ENCODE measurements at regions of chr4 and their contacts with region 1.

Region 1: DNA sequence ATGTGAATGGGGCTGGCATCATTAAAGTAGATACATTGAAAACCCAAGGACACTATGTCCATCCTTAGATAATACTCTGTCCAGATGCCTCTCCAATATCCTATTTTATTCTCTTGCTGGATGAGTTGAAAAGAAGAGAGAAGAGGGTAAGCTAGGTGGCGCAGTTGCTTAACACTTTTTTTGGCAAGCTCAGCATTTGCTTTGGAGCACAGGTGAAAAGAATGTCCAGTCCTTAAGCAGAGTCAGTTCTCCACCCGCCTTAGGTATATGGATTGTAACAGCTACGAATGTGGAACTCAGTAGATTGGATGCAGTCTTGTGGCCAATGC is 208.4 kb downstream of the NWD2 start:
- DNase-seq: peak; percentile 80 to 83
- H3K4me3 ChIP-seq: peak overlapping the region; percentile 61
- H3K4me3 Mint-ChIP-seq: peak overlapping the region; percentile 89
- H3K27ac Mint-ChIP-seq: peak overlapping the region; percentile 24
- H3K4me1 ChIP-seq: peaks cover 19% of the 10 kb centered on the region
- H3K4me1 Mint-ChIP-seq: peaks cover 21% of the 10 kb centered on the region
- H3K27me3 ChIP-seq: no peaks in the 10 kb centered on the region
- H3K27me3 Mint-ChIP-seq: no peaks in the 10 kb centered on the region
- CTCF ChIP-seq: peak; percentile 46 to 71

Region 2: GRCh38 chr4:36502350-36502749 is 950.6 kb before region 1 on chr4:
- CTCF ChIA-PET with region 1: no interaction called
- POLR2A ChIA-PET with region 1: no interaction called
- intact Hi-C with region 1: no loop called
- DNase-seq: no peak
- H3K4me3 ChIP-seq: no peak overlapping the region
- H3K4me3 Mint-ChIP-seq: no peak overlapping the region
- H3K27ac Mint-ChIP-seq: no peak overlapping the region
- H3K4me1 ChIP-seq: no peaks in the 10 kb centered on the region
- H3K4me1 Mint-ChIP-seq: no peaks in the 10 kb centered on the region
- H3K27me3 ChIP-seq: no peaks in the 10 kb centered on the region
- H3K27me3 Mint-ChIP-seq: peaks cover 3% of the 10 kb centered on the region
- CTCF ChIP-seq: no peak

Region 3: DNA sequence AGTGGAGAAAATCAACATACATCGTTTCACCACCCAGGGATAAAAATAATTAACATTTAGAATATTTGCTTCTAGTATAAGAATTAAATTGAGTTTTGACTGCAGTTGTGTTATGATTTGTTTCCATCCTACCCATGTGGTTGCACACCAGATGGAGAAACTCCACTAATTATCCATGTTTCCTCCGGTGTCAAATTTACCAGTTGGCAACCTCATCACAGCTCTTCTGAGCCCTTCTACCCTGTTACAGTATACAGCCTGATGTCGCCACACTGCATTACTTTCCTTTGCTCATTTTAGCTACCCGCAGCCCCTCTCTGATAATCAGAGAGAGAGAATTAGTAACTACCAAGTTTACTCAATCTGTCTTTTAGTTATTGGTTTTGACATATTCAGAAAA is 760.3 kb before region 1 on chr4:
- CTCF ChIA-PET with region 1: no interaction called
- POLR2A ChIA-PET with region 1: no interaction called
- intact Hi-C with region 1: no loop called
- DNase-seq: no peak
- H3K4me3 ChIP-seq: no peak overlapping the region
- H3K4me3 Mint-ChIP-seq: no peak overlapping the region
- H3K27ac Mint-ChIP-seq: no peak overlapping the region
- H3K4me1 ChIP-seq: no peaks in the 10 kb centered on the region
- H3K4me1 Mint-ChIP-seq: no peaks in the 10 kb centered on the region
- H3K27me3 ChIP-seq: no peaks in the 10 kb centered on the region
- H3K27me3 Mint-ChIP-seq: peaks cover 3% of the 10 kb centered on the region
- CTCF ChIP-seq: no peak

Region 4: DNA sequence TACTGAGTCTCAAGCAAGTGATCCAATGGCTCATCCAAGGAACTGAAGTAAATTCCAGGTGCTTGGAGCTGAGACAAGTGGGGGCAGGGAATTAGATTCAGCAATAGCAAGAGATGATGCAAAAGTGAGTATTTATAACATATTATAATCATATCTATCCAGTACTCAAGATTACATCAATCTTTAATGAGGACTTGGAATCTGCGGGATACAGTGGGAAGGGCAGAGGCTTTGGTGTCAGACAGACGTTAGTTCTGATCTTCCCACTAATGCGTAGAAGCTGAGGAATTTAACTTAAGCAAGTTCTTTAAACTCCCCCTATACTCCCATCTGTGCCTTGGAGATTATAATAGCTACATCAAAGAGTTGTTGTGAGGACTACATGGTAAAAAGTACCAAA is 351.7 kb before region 1 on chr4:
- CTCF ChIA-PET with region 1: no interaction called
- POLR2A ChIA-PET with region 1: no interaction called
- intact Hi-C with region 1: no loop called
- DNase-seq: no peak
- H3K4me3 ChIP-seq: no peak overlapping the region
- H3K4me3 Mint-ChIP-seq: no peak overlapping the region
- H3K27ac Mint-ChIP-seq: no peak overlapping the region
- H3K4me1 ChIP-seq: no peaks in the 10 kb centered on the region
- H3K4me1 Mint-ChIP-seq: no peaks in the 10 kb centered on the region
- H3K27me3 ChIP-seq: no peaks in the 10 kb centered on the region; the same call in 1 of the 2 replicates
- H3K27me3 Mint-ChIP-seq: peaks cover 3% of the 10 kb centered on the region
- CTCF ChIP-seq: no peak

Region 5: DNA sequence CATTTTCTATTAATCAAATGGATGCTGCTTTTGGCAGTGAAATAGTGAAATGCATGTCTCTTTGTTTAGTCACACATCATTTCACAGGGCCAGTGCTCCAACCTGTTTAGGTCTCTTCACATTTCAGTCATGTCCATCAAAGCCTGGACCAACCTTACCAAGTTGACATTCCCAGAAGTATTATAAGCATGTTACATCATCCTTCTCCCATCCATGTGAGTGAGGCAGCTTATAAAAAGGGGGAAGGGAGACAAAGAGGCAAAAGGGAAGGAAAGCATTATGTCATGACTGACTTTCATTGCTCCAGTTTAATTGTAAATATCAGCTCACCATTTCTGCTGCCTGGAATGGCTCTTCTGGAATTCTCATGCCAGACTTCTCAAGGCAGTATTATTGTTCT is 113.9 kb before region 1 on chr4:
- CTCF ChIA-PET with region 1: no interaction called
- POLR2A ChIA-PET with region 1: no interaction called
- intact Hi-C with region 1: no loop called
- DNase-seq: no peak
- H3K4me3 ChIP-seq: no peak overlapping the region
- H3K4me3 Mint-ChIP-seq: no peak overlapping the region
- H3K27ac Mint-ChIP-seq: peak overlapping the region; percentile 9
- H3K4me1 ChIP-seq: no peaks in the 10 kb centered on the region
- H3K4me1 Mint-ChIP-seq: no peaks in the 10 kb centered on the region
- H3K27me3 ChIP-seq: no peaks in the 10 kb centered on the region
- H3K27me3 Mint-ChIP-seq: peaks cover 4% of the 10 kb centered on the region
- CTCF ChIP-seq: no peak

Region 6: GRCh38 chr4:37434469-37434868 is 18.4 kb before region 1 on chr4:
- CTCF ChIA-PET with region 1: interaction called, 33 read pairs
- POLR2A ChIA-PET with region 1: no interaction called
- intact Hi-C with region 1: loop called (anchors 1 kb)
- DNase-seq: peak in 1 of 2 experiments; percentile 33
- H3K4me3 ChIP-seq: no peak overlapping the region
- H3K4me3 Mint-ChIP-seq: no peak overlapping the region
- H3K27ac Mint-ChIP-seq: no peak overlapping the region
- H3K4me1 ChIP-seq: peaks cover 58% of the 10 kb centered on the region
- H3K4me1 Mint-ChIP-seq: peaks cover 37% of the 10 kb centered on the region
- H3K27me3 ChIP-seq: no peaks in the 10 kb centered on the region
- H3K27me3 Mint-ChIP-seq: no peaks in the 10 kb centered on the region
- CTCF ChIP-seq: peak in 1 of 2 experiments; percentile 31

Region 7: GRCh38 chr4:37471971-37472370 is 19.1 kb after region 1 on chr4:
- CTCF ChIA-PET with region 1: interaction called, 3 read pairs
- POLR2A ChIA-PET with region 1: interaction called, 5 read pairs
- intact Hi-C with region 1: loop called (anchors 2 kb)
- DNase-seq: peak; percentile 68 to 83
- H3K4me3 ChIP-seq: no peak overlapping the region
- H3K4me3 Mint-ChIP-seq: peak overlapping the region; percentile 39
- H3K27ac Mint-ChIP-seq: peak overlapping the region; percentile 75
- H3K4me1 ChIP-seq: peaks cover 70% of the 10 kb centered on the region
- H3K4me1 Mint-ChIP-seq: peaks cover 38% of the 10 kb centered on the region
- H3K27me3 ChIP-seq: no peaks in the 10 kb centered on the region
- H3K27me3 Mint-ChIP-seq: no peaks in the 10 kb centered on the region
- CTCF ChIP-seq: no peak

Region 8: GRCh38 chr4:37528166-37528885 is 75.4 kb after region 1 on chr4:
- CTCF ChIA-PET with region 1: interaction called, 33 read pairs
- POLR2A ChIA-PET with region 1: interaction called, 4 read pairs
- intact Hi-C with region 1: loop called (anchors 1 kb)
- DNase-seq: peak; percentile 41 to 51
- H3K4me3 ChIP-seq: no peak overlapping the region
- H3K4me3 Mint-ChIP-seq: no peak overlapping the region
- H3K27ac Mint-ChIP-seq: no peak overlapping the region
- H3K4me1 ChIP-seq: peaks cover 14% of the 10 kb centered on the region; the same call in 1 of the 2 replicates
- H3K4me1 Mint-ChIP-seq: no peaks in the 10 kb centered on the region
- H3K27me3 ChIP-seq: no peaks in the 10 kb centered on the region
- H3K27me3 Mint-ChIP-seq: no peaks in the 10 kb centered on the region
- CTCF ChIP-seq: no peak

Region 9: GRCh38 chr4:37561803-37562207 is 108.9 kb after region 1 on chr4:
- CTCF ChIA-PET with region 1: interaction called, 17 read pairs
- POLR2A ChIA-PET with region 1: no interaction called
- intact Hi-C with region 1: loop called (anchors 1 kb)
- DNase-seq: no peak
- H3K4me3 ChIP-seq: no peak overlapping the region
- H3K4me3 Mint-ChIP-seq: no peak overlapping the region
- H3K27ac Mint-ChIP-seq: no peak overlapping the region
- H3K4me1 ChIP-seq: peaks cover 21% of the 10 kb centered on the region
- H3K4me1 Mint-ChIP-seq: peaks cover 12% of the 10 kb centered on the region
- H3K27me3 ChIP-seq: no peaks in the 10 kb centered on the region
- H3K27me3 Mint-ChIP-seq: no peaks in the 10 kb centered on the region
- CTCF ChIP-seq: no peak

Region 10: DNA sequence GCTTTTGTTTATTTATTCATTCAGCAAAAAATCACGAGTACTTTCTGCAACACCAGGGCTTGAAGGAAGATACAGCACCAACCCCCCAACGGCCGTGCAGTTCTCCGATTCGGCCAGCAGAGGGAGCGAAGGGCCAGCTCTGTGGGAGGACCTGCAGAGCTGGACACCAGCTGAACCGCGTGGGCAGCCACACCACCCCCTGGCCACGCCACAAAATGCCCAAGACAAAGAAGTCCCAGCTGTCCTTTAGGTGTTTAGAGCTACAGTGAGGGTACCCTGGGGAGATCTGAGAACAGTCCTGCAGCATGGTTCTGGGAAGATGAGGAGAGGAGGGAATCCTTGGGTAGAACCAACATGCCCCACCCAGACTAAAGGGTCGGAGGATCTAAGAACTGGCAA is 150.2 kb after region 1 on chr4:
- CTCF ChIA-PET with region 1: interaction called, 11 read pairs
- POLR2A ChIA-PET with region 1: interaction called, 6 read pairs
- intact Hi-C with region 1: loop called (anchors 1 kb)
- DNase-seq: peak; percentile 82 to 89
- H3K4me3 ChIP-seq: no peak overlapping the region
- H3K4me3 Mint-ChIP-seq: peak overlapping the region; percentile 33
- H3K27ac Mint-ChIP-seq: peak overlapping the region; percentile 88
- H3K4me1 ChIP-seq: peaks cover 61% of the 10 kb centered on the region
- H3K4me1 Mint-ChIP-seq: peaks cover 59% of the 10 kb centered on the region
- H3K27me3 ChIP-seq: no peaks in the 10 kb centered on the region
- H3K27me3 Mint-ChIP-seq: no peaks in the 10 kb centered on the region
- CTCF ChIP-seq: peak; percentile 89 to 90

Region 11: GRCh38 chr4:37793562-37793961 is 340.6 kb after region 1 on chr4:
- CTCF ChIA-PET with region 1: no interaction called
- POLR2A ChIA-PET with region 1: no interaction called
- intact Hi-C with region 1: loop called (anchors 1 kb)
- DNase-seq: peak; percentile 38 to 45
- H3K4me3 ChIP-seq: no peak overlapping the region
- H3K4me3 Mint-ChIP-seq: no peak overlapping the region
- H3K27ac Mint-ChIP-seq: no peak overlapping the region
- H3K4me1 ChIP-seq: no peaks in the 10 kb centered on the region
- H3K4me1 Mint-ChIP-seq: peaks cover 4% of the 10 kb centered on the region
- H3K27me3 ChIP-seq: no peaks in the 10 kb centered on the region
- H3K27me3 Mint-ChIP-seq: no peaks in the 10 kb centered on the region
- CTCF ChIP-seq: peak; percentile 17 to 60